Sigmoid colon (tissue), 7 donors: ENCODE measurements at regions of chr11 and their contacts with region 1.

Region 1: DNA sequence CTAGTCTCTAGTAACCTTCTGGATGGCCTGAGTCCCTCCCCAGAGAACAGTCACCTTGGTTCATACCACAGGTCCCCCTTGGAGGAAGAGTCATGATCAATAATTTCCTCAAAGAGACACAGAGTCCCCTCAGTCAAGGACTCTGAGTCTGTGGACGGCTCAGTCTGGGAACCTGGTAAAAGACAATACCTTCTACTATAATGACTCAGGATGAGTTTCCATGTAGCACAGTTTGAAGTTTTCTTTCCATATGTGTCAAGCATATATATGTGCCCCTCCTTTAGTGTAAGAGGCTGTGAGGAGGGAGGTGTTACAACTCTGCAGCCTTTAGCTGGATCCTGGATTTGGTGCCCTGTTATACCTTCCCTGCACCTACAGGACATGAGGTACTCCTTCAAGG is 54.4 kb upstream of the TSKU start:
- DNase-seq: no peak
- H3K4me3 ChIP-seq: no peak overlapping the region
- H3K27ac ChIP-seq: no peak overlapping the region
- H3K4me1 ChIP-seq: no peaks in the 10 kb centered on the region
- H3K27me3 ChIP-seq: peaks cover 0 to 4% (median 0%) of the 10 kb centered on the region in 3 donors
- CTCF ChIP-seq: no peak
- EP300 ChIP-seq: no peak
- POLR2A ChIP-seq: no peak

Region 2: DNA sequence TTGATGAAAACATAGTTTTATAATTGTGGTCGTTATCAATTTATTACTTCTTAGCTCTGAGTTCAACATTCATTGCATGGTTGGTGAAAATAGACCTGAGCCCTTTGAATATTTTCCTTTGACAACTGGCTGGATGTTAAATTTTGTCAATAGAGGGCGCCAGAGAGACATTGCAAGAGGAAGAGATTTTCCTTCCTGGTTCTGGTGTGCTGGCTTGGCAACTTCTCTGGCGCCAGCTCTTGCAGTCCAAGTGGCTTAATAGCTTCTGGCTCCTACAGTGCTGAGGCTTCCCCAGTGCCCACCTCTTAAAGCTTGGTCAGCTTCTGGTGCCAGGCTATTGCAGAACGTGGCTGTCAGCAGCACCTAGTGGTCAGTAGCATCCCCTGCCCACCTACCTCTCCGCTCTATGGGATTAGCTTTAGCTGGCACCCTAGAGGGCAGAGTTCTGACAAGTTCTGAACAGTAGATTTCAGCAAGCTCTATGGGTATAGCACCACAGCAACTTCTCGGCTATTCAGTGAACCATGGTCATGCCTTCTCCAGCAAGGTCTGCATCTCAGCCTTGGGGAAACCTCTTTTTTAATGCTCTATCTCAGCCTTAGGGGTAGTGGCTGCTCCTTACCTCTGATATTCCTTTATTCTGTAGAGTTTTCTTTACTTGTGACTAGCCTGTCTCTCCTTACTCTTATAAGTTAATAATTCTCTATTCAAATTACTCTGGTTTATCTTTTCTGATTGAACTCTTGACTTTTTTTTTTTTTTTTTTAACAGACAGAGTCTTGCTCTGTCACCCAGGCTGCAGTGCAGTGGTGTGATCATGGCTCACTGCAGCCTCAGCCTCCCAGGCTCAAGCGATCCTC is 191.3 kb after region 1 on chr11:
- intact Hi-C with region 1: loop called (anchors 2 kb)
- DNase-seq: peak; percentile 89
- H3K4me3 ChIP-seq: no peak overlapping the region
- H3K27ac ChIP-seq: no peak overlapping the region
- H3K4me1 ChIP-seq: peaks cover 0 to 8% (median 3%) of the 10 kb centered on the region in 4 donors
- H3K27me3 ChIP-seq: no peaks in the 10 kb centered on the region
- CTCF ChIP-seq: peak; percentile 46 to 90 (median 78)
- EP300 ChIP-seq: no peak
- POLR2A ChIP-seq: no peak